ENCODE measurements at regions of chr4 and their contacts with region 1.

Region 1: DNA sequence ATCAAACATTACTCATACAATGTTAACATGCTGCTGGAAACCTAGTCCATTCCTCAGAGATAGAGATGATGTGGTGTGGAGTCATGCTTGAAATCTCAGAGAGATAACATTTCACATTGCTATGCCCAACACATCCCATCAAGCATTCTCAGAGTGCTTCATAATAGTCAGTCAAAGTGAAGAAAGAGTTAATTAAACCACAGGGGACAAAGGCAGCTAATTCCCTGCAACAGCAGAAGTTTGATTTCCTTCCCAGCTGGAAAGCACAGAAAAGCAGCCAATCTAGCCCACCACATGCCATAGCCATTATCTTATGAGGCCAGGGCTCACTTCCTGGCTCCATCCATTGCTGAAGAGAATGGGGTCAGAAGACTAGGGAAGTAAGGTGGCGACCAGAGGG is 8.9 kb downstream of the KDR start:
- DNase-seq: no peak
- ATAC-seq: no peak
- H3K4me3 ChIP-seq: no peak overlapping the region
- H3K27ac ChIP-seq: no peak overlapping the region
- H3K4me1 ChIP-seq: no peaks in the 10 kb centered on the region
- H3K27me3 ChIP-seq: no peaks in the 10 kb centered on the region
- CTCF ChIP-seq: no peak

Region 2: DNA sequence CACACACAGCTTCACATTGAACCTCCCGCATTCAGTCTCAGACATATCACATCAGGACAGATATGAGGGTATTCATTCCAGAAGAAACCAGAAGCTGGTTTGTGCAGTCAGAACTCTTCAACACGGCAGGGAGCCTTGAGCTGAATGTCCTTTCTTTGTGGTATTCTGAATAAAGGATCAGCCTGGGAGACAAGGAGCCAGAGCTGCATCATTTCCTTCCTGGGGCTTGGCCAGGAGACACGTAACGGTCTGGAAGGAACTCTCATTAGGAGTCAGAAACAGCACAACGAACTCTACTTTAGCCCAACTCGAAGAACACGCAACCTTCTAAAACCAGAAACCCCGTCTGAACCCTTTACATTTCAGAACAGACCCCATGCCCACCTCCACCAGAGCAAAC is 37.5 kb before region 1 on chr4:
- CTCF ChIA-PET with region 1: no interaction called
- POLR2A ChIA-PET with region 1: no interaction called
- in situ Hi-C with region 1: no loop called
- intact Hi-C with region 1: no loop called
- DNase-seq: no peak
- ATAC-seq: no peak
- H3K4me3 ChIP-seq: no peak overlapping the region
- H3K27ac ChIP-seq: no peak overlapping the region
- H3K4me1 ChIP-seq: no peaks in the 10 kb centered on the region
- H3K27me3 ChIP-seq: no peaks in the 10 kb centered on the region
- CTCF ChIP-seq: no peak

Region 3: DNA sequence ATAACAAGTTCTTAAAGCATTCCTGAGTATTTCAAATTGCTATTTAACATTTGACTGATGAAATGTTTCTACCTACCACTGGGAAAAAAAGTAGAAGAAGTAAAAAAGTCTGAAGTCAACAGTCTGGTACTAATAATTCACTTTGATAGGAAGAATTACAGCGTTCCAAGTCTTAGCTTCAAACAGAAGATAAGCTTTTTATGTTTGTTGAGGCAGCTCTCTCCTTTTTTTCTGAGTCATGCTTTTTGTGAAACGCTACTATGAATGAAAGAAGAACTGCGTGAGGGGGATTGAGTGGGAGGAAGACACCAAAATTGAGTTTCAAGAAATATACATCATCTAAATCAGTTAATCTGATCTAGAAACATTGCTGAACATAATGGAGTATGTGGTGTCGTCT is 21.9 kb after region 1 on chr4:
- CTCF ChIA-PET with region 1: no interaction called
- POLR2A ChIA-PET with region 1: no interaction called
- in situ Hi-C with region 1: no loop called
- intact Hi-C with region 1: no loop called
- DNase-seq: no peak
- ATAC-seq: no peak
- H3K4me3 ChIP-seq: no peak overlapping the region
- H3K27ac ChIP-seq: no peak overlapping the region
- H3K4me1 ChIP-seq: no peaks in the 10 kb centered on the region
- H3K27me3 ChIP-seq: no peaks in the 10 kb centered on the region
- CTCF ChIP-seq: no peak

Region 4: DNA sequence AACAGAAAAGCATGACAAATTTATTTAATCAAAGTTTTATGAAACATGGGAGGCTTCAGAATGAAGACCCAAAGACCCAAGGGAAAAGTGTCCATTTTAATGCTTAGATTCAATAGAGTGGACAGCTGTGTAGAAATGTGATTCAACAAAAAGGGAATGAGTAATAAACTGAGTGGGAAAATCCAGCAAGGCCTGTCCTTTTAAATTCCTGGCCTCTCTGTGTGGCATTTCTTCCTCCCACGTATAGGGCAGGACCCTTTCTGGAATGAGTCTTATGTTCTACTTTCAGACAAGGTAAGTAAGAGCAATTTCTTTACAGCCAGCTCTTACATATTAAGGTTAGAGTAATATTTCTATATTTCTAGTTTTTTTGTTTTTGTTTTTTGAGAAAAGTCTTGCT is 1256.3 kb after region 1 on chr4:
- CTCF ChIA-PET with region 1: no interaction called
- POLR2A ChIA-PET with region 1: interaction called, 18 read pairs
- in situ Hi-C with region 1: no loop called
- intact Hi-C with region 1: no loop called
- DNase-seq: no peak
- ATAC-seq: no peak
- H3K4me3 ChIP-seq: no peak overlapping the region
- H3K27ac ChIP-seq: no peak overlapping the region
- H3K4me1 ChIP-seq: no peaks in the 10 kb centered on the region
- H3K27me3 ChIP-seq: no peaks in the 10 kb centered on the region
- CTCF ChIP-seq: no peak